ENCODE measurements at regions of chr7 and their contacts with region 1.

Region 1: DNA sequence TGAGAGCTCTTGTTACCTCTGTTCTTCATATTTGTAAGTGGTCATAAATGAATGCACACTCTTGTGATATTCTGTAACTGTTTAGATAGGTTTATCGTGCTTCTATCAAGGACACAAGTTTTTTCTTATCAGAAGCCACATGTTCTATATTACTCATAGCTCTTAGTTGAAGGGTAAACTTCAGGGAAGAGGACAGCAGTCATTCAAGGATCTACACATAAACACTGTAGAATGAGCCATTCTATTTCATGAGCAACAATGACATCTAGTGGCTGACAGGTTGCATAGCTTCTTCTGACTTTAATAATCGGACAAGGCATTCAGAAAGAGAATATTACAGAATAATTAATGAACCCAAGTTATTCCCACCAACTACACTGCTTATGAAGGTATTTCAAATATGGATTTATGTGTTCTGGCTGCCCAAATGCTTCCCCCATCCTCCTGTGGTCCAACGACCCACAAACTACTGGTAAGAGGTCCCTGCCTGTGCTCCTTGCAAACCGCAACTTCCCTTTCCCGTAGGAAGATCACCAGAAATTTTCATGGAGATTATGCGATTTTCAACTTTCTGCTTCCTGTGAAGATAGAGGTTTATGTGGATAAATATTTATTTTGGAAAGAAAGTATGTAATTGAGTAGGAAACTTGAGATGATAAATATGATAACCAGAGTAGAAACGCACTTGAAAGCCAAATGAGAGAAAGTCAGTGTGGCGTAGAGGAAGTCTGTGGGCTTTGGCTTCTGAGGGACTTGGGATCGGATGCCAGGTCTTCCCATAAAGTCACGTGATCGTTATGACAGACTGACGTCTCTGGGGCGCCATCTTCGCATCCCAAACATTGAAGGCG is 16.8 kb upstream of the ABCB5 start:
- DNase-seq: no peak

Region 2: DNA sequence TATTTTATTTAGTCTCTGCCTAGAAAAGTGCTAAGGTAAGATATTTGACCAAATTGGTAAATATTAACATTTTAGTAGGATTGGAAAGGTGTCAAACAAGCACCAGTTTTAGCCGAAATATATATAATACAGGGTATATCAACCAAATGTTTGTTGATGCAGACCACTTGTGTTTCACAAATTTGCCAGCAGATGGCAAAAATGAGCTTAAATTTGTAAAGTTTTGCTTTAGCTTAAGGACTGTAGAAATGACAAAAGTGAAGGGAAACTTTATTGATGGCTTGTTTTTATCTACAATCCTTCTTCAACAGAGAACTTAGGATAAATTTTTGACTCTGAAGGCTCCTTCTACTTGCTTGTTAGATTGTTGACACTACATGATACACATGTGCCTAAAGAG is 885.0 kb before region 1 on chr7:
- intact Hi-C with region 1: loop called (anchors 5 kb)
- DNase-seq: no peak

Region 3: DNA sequence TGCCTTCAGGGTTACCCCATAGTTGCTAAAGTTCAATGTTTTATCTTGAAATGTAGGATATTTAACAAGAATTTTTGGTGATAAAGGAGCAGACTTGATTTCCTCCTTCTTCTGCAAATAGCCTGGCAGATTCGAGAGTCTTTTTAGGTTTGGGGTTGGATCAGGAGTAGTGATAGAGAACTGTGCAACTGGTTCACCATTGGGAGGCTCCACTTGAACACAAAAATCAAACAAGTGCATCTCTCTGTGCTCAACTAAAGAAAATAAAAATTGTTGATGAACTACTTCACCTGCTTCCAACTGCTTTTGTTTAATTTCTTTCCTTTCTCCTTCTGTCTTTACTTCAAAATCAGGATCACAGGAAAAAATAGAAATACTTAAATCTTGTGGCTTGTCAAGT is 440.0 kb before region 1 on chr7:
- intact Hi-C with region 1: loop called (anchors 2 kb)
- DNase-seq: no peak

Region 4: GRCh38 chr7:20560325-20561180 is 38.1 kb before region 1 on chr7:
- intact Hi-C with region 1: no loop called
- DNase-seq: no peak

Region 5: GRCh38 chr7:20828947-20829346 is 230.3 kb after region 1 on chr7:
- intact Hi-C with region 1: no loop called
- DNase-seq: no peak

Measured in cardiac septum (tissue), 1 donor.